ENCODE measurements at regions of chr10 and their contacts with region 1.

Region 1: GRCh38 chr10:84375011-84375410 is 46.6 kb downstream of the CCSER2 start:
- DNase-seq: peak; percentile 57
- ATAC-seq: peak; percentile 63
- H3K4me3 ChIP-seq: no peak overlapping the region
- H3K27ac ChIP-seq: no peak overlapping the region
- H3K4me1 ChIP-seq: no peaks in the 10 kb centered on the region
- H3K27me3 ChIP-seq: no peaks in the 10 kb centered on the region
- CTCF ChIP-seq: peak; percentile 60 to 80 (median 73); a peak in 5 of 6 replicates
- POLR2A ChIP-seq: no peak
- RAD21 ChIP-seq: peak; percentile 83

Region 2: GRCh38 chr10:84715911-84716310 is 340.9 kb after region 1 on chr10:
- CTCF ChIA-PET with region 1: no interaction called
- POLR2A ChIA-PET with region 1: no interaction called
- RAD21 ChIA-PET with region 1: no interaction called
- intact Hi-C with region 1: loop called (anchors 10 kb)
- DNase-seq: peak; percentile 31
- ATAC-seq: peak; percentile 98
- H3K4me3 ChIP-seq: no peak overlapping the region
- H3K27ac ChIP-seq: no peak overlapping the region
- H3K4me1 ChIP-seq: no peaks in the 10 kb centered on the region
- H3K27me3 ChIP-seq: peaks cover 36% of the 10 kb centered on the region
- CTCF ChIP-seq: peak; percentile 59 to 93 (median 88); a peak in 5 of 6 replicates
- POLR2A ChIP-seq: no peak
- RAD21 ChIP-seq: peak; percentile 54

Region 3: DNA sequence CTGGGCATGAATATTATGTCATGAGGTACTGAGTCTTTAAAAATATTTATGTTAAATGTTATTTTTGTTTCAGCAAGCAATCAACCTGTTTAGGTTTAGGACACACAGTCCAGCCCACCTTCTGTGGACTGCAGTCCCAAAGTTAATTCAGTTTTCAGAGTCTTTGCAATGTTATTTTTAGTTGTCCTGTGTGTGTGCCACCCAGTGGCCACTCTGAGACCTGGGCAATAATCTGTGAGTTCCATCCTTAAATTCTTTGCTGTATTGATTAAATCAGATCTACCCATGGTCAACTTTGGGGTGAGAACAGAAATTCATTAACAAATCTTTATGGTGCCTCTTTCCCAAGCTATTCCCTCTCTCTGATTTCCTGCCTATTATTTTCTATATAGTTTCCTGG is 368.5 kb after region 1 on chr10:
- CTCF ChIA-PET with region 1: no interaction called
- POLR2A ChIA-PET with region 1: no interaction called
- RAD21 ChIA-PET with region 1: no interaction called
- intact Hi-C with region 1: loop called (anchors 10 kb)
- DNase-seq: peak; percentile 2
- ATAC-seq: peak; percentile 65
- H3K4me3 ChIP-seq: no peak overlapping the region
- H3K27ac ChIP-seq: no peak overlapping the region
- H3K4me1 ChIP-seq: no peaks in the 10 kb centered on the region
- H3K27me3 ChIP-seq: no peaks in the 10 kb centered on the region
- CTCF ChIP-seq: peak; percentile 28 to 67 (median 64); a peak in 5 of 6 replicates
- POLR2A ChIP-seq: no peak
- RAD21 ChIP-seq: peak; percentile 24; the same call in 1 of the 2 replicates